IMR-90 (cell line): ENCODE measurements at regions of chr10 and their contacts with region 1.

Region 1: DNA sequence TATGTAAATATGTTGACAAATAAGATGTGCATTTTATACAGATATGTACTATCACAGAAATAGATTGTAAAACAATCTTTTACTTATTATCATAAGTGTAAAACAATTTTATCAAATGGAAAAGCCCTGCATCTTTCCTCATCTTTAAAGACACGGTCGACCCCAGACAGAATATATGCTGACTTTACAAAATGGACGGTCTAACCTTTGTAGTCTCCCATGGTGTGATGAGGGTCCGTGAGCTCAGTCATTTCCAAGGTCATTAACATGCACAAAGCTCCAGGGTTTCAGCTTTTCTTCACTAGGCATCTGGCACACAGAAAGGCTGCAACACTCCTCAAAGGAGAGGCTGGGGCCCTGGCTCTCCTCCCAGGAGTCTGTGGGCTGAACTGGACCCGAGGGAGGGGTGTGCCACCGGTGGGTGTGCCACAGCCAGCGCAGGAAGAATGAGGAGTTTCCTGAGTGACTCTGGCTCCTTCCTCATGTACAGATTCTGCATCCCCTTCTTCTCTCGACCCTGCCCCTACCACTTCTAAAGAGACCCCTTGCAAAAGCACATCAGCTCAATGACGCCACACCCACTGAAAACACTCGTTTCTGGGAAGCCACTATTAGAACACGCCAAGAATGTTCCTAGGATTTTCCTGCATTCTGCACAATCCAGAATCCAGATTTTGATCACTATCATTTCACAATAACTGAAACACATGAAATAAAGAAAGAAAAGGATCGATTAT is 26.2 kb upstream of the ABLIM1 start:
- DNase-seq: peak; percentile 30
- ATAC-seq: peak; percentile 54
- H3K4me3 ChIP-seq: no peak overlapping the region
- H3K27ac ChIP-seq: peak overlapping the region; percentile 57; the same call in 1 of the 2 replicates
- H3K4me1 ChIP-seq: peaks cover 10% of the 10 kb centered on the region
- H3K27me3 ChIP-seq: no peaks in the 10 kb centered on the region
- CTCF ChIP-seq: no peak
- POLR2A ChIP-seq: no peak
- RAD21 ChIP-seq: no peak

Region 2: GRCh38 chr10:114631666-114632417 is 52.4 kb before region 1 on chr10:
- CTCF ChIA-PET with region 1: no interaction called
- POLR2A ChIA-PET with region 1: no interaction called
- dilution Hi-C with region 1: no loop called
- in situ Hi-C with region 1: no loop called
- intact Hi-C with region 1: loop called (anchors 5 kb)
- DNase-seq: no peak
- ATAC-seq: peak; percentile 35
- H3K4me3 ChIP-seq: peak overlapping the region; percentile 66
- H3K27ac ChIP-seq: peak overlapping the region; percentile 3; the same call in 1 of the 2 replicates
- H3K4me1 ChIP-seq: peaks cover 13% of the 10 kb centered on the region
- H3K27me3 ChIP-seq: peaks cover 5% of the 10 kb centered on the region; the same call in 1 of the 2 replicates
- CTCF ChIP-seq: no peak
- POLR2A ChIP-seq: no peak
- RAD21 ChIP-seq: no peak

Region 3: DNA sequence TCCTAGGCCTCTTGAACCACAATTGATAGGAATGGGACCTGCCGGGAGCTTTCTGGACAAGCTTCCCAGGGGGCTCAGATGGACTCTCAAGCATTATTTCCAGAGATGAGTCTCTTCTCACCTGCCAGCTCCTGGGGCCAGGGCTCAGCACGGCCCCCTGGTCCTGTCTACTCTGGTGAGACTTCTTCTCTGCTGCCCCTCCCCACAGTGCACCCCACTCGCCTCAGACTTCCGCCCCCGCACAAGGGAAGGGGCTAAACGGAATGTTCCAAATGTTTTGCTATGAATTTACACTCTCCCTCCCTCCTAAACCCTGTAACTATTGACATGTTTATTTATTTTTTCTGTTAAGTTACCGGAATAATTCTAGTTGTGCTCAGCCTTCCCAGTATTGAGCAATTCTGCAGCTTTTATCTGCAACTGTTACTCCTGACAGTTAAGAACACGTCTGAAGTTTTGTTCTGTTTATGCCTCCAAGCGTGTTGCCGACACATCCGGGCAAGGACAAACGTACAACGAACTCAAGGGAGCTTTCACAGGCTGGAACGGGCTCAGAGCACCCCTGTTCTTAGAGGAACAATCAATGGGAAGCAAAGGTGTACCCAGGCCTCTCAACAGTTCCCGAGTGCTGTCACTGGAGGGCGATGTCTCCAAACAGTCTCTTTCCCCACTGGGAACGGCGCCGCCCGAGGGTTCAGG is 192.5 kb after region 1 on chr10:
- CTCF ChIA-PET with region 1: no interaction called
- POLR2A ChIA-PET with region 1: no interaction called
- dilution Hi-C with region 1: no loop called
- in situ Hi-C with region 1: no loop called
- intact Hi-C with region 1: no loop called
- DNase-seq: peak; percentile 58
- ATAC-seq: peak; percentile 88
- H3K4me3 ChIP-seq: no peak overlapping the region
- H3K27ac ChIP-seq: no peak overlapping the region
- H3K4me1 ChIP-seq: 0 out of 2 replicates have a peak, but pooled peaks cover 2% of the 10 kb centered on the region
- H3K27me3 ChIP-seq: no peaks in the 10 kb centered on the region
- CTCF ChIP-seq: peak; percentile 87
- POLR2A ChIP-seq: no peak
- RAD21 ChIP-seq: peak; percentile 91